Activated CD4-positive, alpha-beta memory T cell treated with anti-CD3 and anti-CD28 coated beads for 36 hours (primary cell): ENCODE measurements at regions of chr1 and their contacts with region 1.

Region 1: DNA sequence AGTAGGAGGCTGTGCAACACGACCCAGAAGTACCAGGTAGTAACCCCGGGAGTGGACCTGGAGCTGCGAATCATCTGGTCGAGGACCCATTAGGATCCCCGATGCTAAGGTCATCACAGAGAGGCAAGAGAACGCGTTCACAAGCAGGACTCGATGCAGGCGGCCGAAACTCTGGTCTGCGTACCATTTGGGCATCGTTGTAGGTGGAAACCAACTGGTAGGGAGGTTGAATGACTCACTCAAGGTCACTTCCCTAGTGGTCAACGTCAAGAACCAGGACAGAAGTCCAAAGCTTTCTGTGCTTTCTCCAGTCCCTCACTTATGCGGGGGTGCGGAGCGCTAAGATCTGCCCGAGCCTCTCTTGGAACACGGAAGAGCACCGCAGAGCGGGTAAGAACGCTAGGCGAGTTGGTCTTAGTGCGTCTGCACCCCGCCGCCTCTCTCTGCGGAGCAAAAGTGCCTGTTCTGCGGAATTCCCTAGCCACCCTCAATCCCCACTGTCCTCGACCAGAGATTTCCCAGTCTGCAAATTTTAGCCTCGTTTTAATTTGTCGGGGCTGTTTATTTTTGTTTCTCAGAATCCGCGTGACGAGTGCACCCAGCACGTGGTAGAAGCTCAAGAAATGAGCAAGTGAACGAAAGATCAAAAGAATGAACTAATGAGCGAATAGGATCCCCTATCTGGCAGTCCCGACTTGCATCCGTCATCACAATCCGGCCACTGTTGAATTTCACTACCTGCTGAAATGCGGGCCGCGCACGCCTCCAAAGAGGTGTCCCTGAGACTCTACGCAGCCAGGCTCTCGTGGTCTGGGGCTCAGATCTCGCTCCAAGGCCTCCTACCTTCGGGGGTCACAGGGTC is 12.2 kb downstream of the HLX start:
- DNase-seq: no peak
- H3K4me3 Mint-ChIP-seq: no peak overlapping the region
- H3K27ac Mint-ChIP-seq: no peak overlapping the region
- H3K4me1 Mint-ChIP-seq: peaks cover 10% of the 10 kb centered on the region
- H3K27me3 Mint-ChIP-seq: peaks cover 76% of the 10 kb centered on the region

Region 2: DNA sequence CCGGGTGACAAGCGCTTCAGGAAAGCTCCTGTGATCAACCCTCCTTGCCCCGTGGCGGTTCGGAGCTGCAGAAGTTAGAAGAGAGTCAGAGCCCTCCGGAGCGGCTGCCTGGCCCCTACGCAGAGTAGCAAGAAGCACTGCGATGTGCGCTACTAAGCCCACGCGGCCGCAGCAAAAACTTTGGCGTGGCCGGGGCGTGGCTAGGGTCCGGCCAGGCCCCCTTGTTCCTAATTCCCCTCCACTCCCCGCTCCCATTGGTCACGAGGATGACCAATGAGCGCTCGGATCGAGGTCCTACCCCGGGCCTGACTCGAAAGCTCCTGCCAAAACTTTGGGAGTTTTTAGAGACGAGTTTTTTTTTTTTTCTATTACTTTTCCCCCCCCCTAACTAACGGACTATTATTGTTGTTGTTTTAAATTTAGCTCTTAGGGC is 12.4 kb before region 1 on chr1 and contains the start of gene HLX:
- CTCF ChIA-PET with region 1: interaction called, 3 read pairs
- POLR2A ChIA-PET with region 1: interaction called, 4 read pairs
- intact Hi-C with region 1: loop called (anchors 2 kb)
- DNase-seq: peak; percentile 39
- H3K4me3 Mint-ChIP-seq: peak within 1 kb of the TSS; percentile 50
- H3K27ac Mint-ChIP-seq: no peak within 1 kb of the TSS
- H3K4me1 Mint-ChIP-seq: peaks cover 34% of the 10 kb centered on the region
- H3K27me3 Mint-ChIP-seq: peaks cover 74% of the 10 kb centered on the region
- total RNA-seq, gene HLX: 0.19 TPM in 1 of 2 experiments, not detected in the other